ENCODE measurements at regions of chr10 and their contacts with region 1.

Region 1: GRCh38 chr10:22988581-22989360 is 60.9 kb downstream of the ARMC3 start:
- DNase-seq: peak; percentile 34
- ATAC-seq: peak; percentile 44
- H3K4me3 ChIP-seq: no peak overlapping the region; a peak in 1 of 6 replicates
- H3K27ac ChIP-seq: no peak overlapping the region
- H3K4me1 ChIP-seq: peaks cover 11% of the 10 kb centered on the region; the same call in 1 of the 2 replicates
- H3K27me3 ChIP-seq: peaks cover 2% of the 10 kb centered on the region in 2 experiments; a peak in 1 of 5 replicates
- CTCF ChIP-seq: peak; percentile 85
- EP300 ChIP-seq: no peak
- POLR2A ChIP-seq: no peak
- RAD21 ChIP-seq: peak; percentile 76

Region 2: DNA sequence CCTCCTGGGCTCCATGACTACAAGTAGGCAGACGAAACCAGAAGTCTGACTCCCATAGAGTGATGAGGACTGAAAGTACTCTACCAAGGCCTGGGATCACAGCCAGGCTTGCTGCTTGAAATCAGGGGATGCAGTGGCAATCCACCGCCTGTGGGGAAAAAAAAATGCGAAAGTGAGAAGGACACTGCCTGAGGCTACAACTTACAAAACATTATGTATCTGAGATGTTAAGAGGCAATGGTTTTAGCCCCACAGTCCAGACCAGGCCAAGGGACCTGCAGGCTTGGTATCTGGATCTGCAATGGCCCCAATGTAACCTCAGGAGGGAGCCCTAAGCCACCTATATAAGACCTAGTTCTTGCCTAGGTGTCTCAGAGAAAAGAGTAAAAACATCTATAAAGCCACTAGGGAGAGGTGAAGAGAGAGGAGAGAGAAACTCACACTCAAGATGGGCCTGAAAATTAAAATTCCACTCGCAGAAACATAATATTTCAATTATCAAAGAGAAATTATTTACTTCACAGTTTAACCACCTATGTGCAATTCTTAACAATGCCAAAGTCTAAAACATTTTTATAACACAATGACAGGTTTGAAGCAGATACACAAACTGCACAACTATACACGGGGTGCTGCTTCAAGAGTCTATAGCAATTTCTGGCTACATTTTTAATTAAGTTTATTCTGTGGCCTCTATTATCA is 999.2 kb before region 1 on chr10:
- CTCF ChIA-PET with region 1: interaction called, 6 read pairs
- POLR2A ChIA-PET with region 1: no interaction called
- in situ Hi-C with region 1: no loop called
- intact Hi-C with region 1: loop called (anchors 10 kb)
- DNase-seq: peak; percentile 53
- ATAC-seq: peak; percentile 100
- H3K4me3 ChIP-seq: no peak overlapping the region
- H3K27ac ChIP-seq: no peak overlapping the region
- H3K4me1 ChIP-seq: no peaks in the 10 kb centered on the region
- H3K27me3 ChIP-seq: no peaks in the 10 kb centered on the region
- CTCF ChIP-seq: peak; percentile 79
- EP300 ChIP-seq: no peak
- POLR2A ChIP-seq: no peak
- RAD21 ChIP-seq: peak; percentile 55; the same call in 1 of the 2 replicates

Region 3: GRCh38 chr10:22003079-22003913 is 985.5 kb before region 1 on chr10 and contains the start of gene DNAJC1:
- CTCF ChIA-PET with region 1: no interaction called
- POLR2A ChIA-PET with region 1: no interaction called
- in situ Hi-C with region 1: loop called (anchors 5 kb)
- intact Hi-C with region 1: loop called (anchors 10 kb)
- DNase-seq: peak; percentile 92
- ATAC-seq: peak; percentile 98
- H3K4me3 ChIP-seq: peak within 1 kb of the TSS; percentile 72 to 93 (median 83)
- H3K27ac ChIP-seq: peak within 1 kb of the TSS; percentile 84
- H3K4me1 ChIP-seq: peaks cover 20% of the 10 kb centered on the region
- H3K27me3 ChIP-seq: peaks cover 0 to 6% of the 10 kb centered on the region in 2 experiments; a peak in 1 of 5 replicates
- CTCF ChIP-seq: peak; percentile 8; the same call in 1 of the 2 replicates
- EP300 ChIP-seq: no peak
- POLR2A ChIP-seq: peak; percentile 66 to 77
- RAD21 ChIP-seq: peak; percentile 46; the same call in 1 of the 2 replicates
- total RNA-seq, gene DNAJC1: 8.8 and 16.6 TPM in 2 replicates

Region 4: GRCh38 chr10:22010973-22011408 is 977.8 kb before region 1 on chr10:
- CTCF ChIA-PET with region 1: interaction called, 13 read pairs
- POLR2A ChIA-PET with region 1: no interaction called
- in situ Hi-C with region 1: no loop called
- intact Hi-C with region 1: loop called (anchors 2 kb)
- DNase-seq: no peak
- ATAC-seq: no peak
- H3K4me3 ChIP-seq: no peak overlapping the region
- H3K27ac ChIP-seq: no peak overlapping the region
- H3K4me1 ChIP-seq: no peaks in the 10 kb centered on the region
- H3K27me3 ChIP-seq: no peaks in the 10 kb centered on the region
- CTCF ChIP-seq: no peak
- EP300 ChIP-seq: no peak
- POLR2A ChIP-seq: no peak
- RAD21 ChIP-seq: no peak

Region 5: DNA sequence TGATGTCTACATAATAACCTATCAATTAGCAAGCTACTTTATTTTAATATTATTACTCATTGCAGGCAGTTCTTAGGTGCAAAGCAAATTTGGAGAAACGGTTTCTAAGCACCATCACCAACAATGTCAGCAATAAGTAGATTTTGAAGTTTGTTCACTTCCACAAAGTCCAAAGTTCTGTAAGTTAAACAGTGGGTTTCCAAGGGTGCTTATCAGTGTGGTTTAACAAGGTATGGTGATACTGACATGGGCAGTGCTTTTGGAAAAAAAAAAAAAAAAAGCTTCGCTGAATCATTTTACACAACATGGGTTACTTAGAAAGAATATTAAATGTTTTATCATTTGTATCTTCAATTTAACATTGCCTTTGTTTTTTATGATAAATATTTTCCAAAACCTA is 541.7 kb before region 1 on chr10:
- CTCF ChIA-PET with region 1: no interaction called
- POLR2A ChIA-PET with region 1: no interaction called
- in situ Hi-C with region 1: no loop called
- intact Hi-C with region 1: loop called (anchors 5 kb)
- DNase-seq: peak; percentile 84
- ATAC-seq: peak; percentile 86
- H3K4me3 ChIP-seq: no peak overlapping the region
- H3K27ac ChIP-seq: no peak overlapping the region
- H3K4me1 ChIP-seq: peaks cover 50% of the 10 kb centered on the region
- H3K27me3 ChIP-seq: no peaks in the 10 kb centered on the region
- CTCF ChIP-seq: no peak
- EP300 ChIP-seq: peak in 1 of 2 experiments; percentile 50; a peak in 2 of 4 replicates
- POLR2A ChIP-seq: no peak
- RAD21 ChIP-seq: no peak

Region 6: GRCh38 chr10:22573820-22574569 is 414.8 kb before region 1 on chr10:
- CTCF ChIA-PET with region 1: interaction called, 25 read pairs
- POLR2A ChIA-PET with region 1: no interaction called
- in situ Hi-C with region 1: loop called (anchors 5 kb)
- intact Hi-C with region 1: loop called (anchors 1 kb)
- DNase-seq: peak; percentile 28
- ATAC-seq: peak; percentile 47; the same call in 1 of the 3 replicates
- H3K4me3 ChIP-seq: no peak overlapping the region
- H3K27ac ChIP-seq: no peak overlapping the region
- H3K4me1 ChIP-seq: no peaks in the 10 kb centered on the region
- H3K27me3 ChIP-seq: no peaks in the 10 kb centered on the region
- CTCF ChIP-seq: peak; percentile 72
- EP300 ChIP-seq: no peak
- POLR2A ChIP-seq: no peak
- RAD21 ChIP-seq: peak; percentile 54

Region 7: GRCh38 chr10:22894714-22895113 is 94.1 kb before region 1 on chr10:
- CTCF ChIA-PET with region 1: no interaction called
- POLR2A ChIA-PET with region 1: no interaction called
- in situ Hi-C with region 1: no loop called
- intact Hi-C with region 1: no loop called
- DNase-seq: no peak
- ATAC-seq: no peak
- H3K4me3 ChIP-seq: no peak overlapping the region
- H3K27ac ChIP-seq: no peak overlapping the region
- H3K4me1 ChIP-seq: no peaks in the 10 kb centered on the region
- H3K27me3 ChIP-seq: no peaks in the 10 kb centered on the region; a peak in 1 of 5 replicates
- CTCF ChIP-seq: no peak
- EP300 ChIP-seq: no peak
- POLR2A ChIP-seq: no peak
- RAD21 ChIP-seq: no peak

Region 8: DNA sequence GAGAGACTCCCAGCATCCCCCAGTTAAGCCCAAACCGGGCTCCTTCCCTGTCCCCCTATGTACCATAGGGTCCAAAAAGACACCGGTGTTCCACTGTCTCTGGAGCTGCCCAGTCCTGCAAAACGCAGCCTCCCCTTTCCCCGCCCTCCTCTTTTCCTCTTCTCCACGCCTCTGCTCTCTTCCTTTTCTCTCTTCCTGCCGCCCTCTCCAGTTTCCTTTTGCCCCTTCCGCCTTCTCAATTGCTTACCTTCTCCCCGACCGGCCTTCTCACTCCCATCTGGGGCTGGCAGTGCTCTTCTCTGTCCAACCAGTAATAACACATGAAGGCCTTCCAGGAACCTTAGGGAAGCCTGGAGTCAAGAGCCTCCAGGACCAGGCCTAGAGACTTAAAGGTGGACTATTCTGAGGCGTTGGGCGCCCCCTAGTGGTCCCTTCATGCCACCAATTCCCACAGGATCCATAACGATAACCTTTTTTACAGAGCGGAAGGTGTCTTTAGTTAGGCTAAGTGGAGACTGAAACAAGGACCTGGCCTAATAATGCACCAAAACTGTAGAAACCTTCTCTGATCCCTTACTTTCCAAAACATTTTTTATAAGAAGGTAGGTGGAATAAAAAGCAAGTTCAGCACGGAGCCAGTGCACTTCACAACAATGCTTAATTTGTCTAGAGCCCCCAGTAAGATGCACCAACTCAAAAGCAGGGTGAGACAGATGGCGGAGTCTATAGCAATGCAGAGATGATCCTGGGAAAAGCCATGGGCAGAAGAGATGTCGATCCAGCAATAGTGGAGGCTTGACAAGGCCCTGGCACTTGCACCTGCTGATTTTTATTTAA is 79.4 kb after region 1 on chr10:
- CTCF ChIA-PET with region 1: no interaction called
- POLR2A ChIA-PET with region 1: no interaction called
- in situ Hi-C with region 1: no loop called
- intact Hi-C with region 1: loop called (anchors 2 kb)
- DNase-seq: peak; percentile 51
- ATAC-seq: peak; percentile 95
- H3K4me3 ChIP-seq: no peak overlapping the region
- H3K27ac ChIP-seq: no peak overlapping the region
- H3K4me1 ChIP-seq: no peaks in the 10 kb centered on the region; the same call in 1 of the 2 replicates
- H3K27me3 ChIP-seq: 0 out of 5 replicates have a peak, but pooled peaks cover 0 to 5% of the 10 kb centered on the region in 2 experiments
- CTCF ChIP-seq: peak; percentile 78
- EP300 ChIP-seq: no peak
- POLR2A ChIP-seq: no peak
- RAD21 ChIP-seq: 0 out of 2 replicates have a peak, but pooled peaks have one; percentile 15